ENCODE measurements at regions of chr12 and their contacts with region 1.

Region 1: DNA sequence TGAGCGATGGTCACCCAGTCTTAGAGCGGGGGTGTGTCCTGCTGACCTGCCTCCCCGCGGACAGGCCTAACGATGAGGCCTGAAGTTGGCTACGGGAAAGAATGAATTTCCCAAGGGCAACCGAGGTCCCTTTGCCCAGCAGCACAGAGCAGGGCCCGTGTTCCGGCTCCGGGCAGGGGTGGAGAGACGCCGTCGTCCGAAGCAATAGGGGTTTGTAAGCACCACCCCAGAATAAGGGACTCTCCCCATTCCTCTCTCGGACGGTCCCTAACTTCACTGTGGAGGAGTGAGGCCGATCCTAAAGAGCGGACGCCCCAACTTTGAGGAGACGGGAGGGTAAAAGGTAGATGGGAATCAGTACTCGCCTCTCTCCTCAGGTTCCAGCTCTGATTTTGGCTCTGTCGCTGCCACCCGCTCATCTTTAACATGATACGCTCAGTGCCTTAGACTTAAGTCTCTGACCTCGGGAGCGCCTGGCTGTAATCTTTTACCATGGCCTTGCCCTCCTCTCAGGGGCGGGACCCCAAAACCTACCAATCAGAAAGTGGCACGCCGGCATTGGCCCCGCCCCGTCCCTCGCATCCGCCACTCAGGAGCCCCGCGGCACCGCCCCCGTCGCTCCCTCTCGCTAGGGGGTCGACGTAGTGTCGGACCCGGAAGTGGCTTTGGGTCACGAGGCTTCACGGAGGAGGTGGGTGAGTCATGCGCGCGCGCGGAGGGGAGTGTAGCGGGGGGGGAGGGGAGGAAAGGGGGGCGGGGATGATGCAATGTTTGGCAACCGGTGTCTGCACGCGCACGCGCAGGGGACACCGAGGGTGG is at the start of gene DDIT3:
- DNase-seq: peak; percentile 99
- ATAC-seq: peak; percentile 73
- H3K4me3 Mint-ChIP-seq: peak within 1 kb of the TSS; percentile 98
- H3K27ac Mint-ChIP-seq: peak within 1 kb of the TSS; percentile 99
- H3K4me1 Mint-ChIP-seq: peaks cover 59% of the 10 kb centered on the region
- H3K27me3 Mint-ChIP-seq: no peaks in the 10 kb centered on the region
- CTCF ChIP-seq: no peak
- total RNA-seq, gene DDIT3: 30.5 and 34.3 TPM in 2 replicates

Region 2: DNA sequence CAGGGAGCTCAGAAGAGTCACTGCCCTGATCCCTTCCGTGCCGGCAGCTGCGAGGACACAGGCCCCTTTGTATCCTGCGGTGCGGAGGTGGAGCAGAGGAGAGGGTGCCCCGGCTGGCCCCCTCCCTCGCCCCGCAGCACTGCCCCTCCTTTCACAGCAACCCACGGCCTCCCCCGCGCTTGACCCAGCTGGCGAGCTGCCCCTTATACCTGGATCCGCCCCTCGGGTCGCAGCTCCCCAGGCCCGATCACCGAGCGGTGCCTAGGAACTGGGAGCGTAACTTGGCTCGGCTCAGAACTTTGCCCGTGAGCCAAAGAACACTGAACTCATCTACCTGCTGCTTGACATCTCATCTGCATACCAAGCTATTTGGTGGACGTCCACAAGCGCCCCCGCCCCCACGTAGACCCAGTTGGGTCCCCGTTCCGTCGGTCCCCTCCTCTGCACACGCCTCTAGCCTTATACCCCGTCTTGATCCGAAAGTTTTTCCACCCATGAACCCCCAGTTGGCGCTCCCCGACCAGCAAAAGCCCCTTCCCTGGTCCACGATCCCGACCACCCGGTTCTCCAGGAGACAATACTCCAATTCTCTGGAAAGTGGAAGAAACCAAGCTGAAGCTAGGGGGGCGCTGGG is 1690.2 kb before region 1 on chr12:
- CTCF ChIA-PET with region 1: no interaction called
- POLR2A ChIA-PET with region 1: no interaction called
- intact Hi-C with region 1: loop called (anchors 5 kb)
- DNase-seq: peak; percentile 32
- ATAC-seq: peak; percentile 13
- H3K4me3 Mint-ChIP-seq: peak overlapping the region; percentile 97
- H3K27ac Mint-ChIP-seq: peak overlapping the region; percentile 91
- H3K4me1 Mint-ChIP-seq: peaks cover 51% of the 10 kb centered on the region
- H3K27me3 Mint-ChIP-seq: no peaks in the 10 kb centered on the region
- CTCF ChIP-seq: no peak

Region 3: DNA sequence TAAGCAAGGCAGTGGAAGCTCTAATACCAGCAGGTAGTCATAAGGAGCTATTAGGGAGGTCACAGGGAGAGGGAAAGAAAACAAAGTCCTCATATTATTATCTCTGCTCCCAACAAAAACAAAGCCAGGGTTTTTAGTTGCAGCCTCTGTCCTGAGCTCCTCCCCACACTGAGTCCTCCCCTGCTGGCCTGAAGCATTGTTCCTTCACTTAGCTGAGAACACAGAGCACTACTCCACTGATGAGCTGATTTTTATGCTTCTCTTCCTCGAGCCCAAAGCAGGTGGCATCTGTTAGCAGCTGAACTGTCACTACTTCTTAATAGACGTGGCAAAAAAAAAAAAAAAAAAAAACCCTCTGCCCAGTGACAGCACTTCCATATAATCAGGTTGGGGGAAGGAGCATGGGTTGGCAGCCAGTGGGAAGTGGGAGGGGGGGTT is 258.8 kb before region 1 on chr12:
- CTCF ChIA-PET with region 1: no interaction called
- POLR2A ChIA-PET with region 1: no interaction called
- intact Hi-C with region 1: no loop called
- DNase-seq: no peak
- ATAC-seq: no peak
- H3K4me3 Mint-ChIP-seq: no peak overlapping the region
- H3K27ac Mint-ChIP-seq: no peak overlapping the region
- H3K4me1 Mint-ChIP-seq: peaks cover 5% of the 10 kb centered on the region
- H3K27me3 Mint-ChIP-seq: no peaks in the 10 kb centered on the region
- CTCF ChIP-seq: no peak

Region 4: DNA sequence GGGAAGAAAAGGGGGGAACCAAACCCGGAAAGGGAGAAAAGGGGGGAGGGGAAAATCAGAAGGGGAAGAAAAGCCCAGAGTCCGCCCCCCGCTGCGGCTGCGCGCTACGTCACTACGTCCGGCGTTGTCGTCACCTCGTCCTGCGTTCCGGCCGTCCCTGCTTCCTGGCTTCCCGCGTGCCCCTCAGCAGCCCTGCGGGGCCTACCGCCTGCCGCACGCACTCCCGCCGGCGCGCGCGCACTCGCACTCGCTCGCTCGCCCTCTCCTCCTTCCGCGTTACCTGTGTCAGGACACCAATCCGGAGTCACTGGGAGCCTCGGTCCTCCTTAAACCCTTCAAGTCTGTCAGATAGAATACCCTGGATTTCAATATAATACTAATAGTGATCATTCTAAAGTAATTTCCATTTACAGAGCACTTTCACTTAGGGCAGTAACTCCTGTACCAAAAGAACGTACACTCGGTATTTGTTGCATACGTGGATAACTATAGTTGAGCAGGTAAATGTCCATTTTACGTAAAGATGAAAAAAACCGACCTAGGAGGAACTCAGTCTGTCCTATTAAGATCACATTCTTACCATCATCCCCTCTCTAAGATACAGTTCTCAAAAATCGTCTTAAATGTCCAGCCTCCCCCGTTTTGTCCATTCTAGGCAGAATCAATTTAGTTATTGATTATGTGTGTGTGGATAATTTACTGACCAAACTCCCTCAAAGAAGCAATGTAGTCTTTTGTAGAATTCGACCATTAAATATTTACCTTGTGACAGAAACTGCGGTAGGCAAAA is 89.1 kb before region 1 on chr12 and contains the start of gene R3HDM2:
- CTCF ChIA-PET with region 1: no interaction called
- POLR2A ChIA-PET with region 1: interaction called, 9 read pairs
- intact Hi-C with region 1: loop called (anchors 1 kb)
- DNase-seq: peak; percentile 94
- ATAC-seq: peak; percentile 91
- H3K4me3 Mint-ChIP-seq: peak within 1 kb of the TSS; percentile 97
- H3K27ac Mint-ChIP-seq: peak within 1 kb of the TSS; percentile 99
- H3K4me1 Mint-ChIP-seq: peaks cover 39% of the 10 kb centered on the region
- H3K27me3 Mint-ChIP-seq: no peaks in the 10 kb centered on the region
- CTCF ChIP-seq: no peak
- total RNA-seq, gene R3HDM2: 74.2 and 75.6 TPM in 2 replicates

Region 5: GRCh38 chr12:57487597-57488401 is 32.5 kb before region 1 on chr12 and contains the start of gene MARS1:
- CTCF ChIA-PET with region 1: no interaction called
- POLR2A ChIA-PET with region 1: interaction called, 19 read pairs
- intact Hi-C with region 1: loop called (anchors 1 kb)
- DNase-seq: peak; percentile 83
- ATAC-seq: peak; percentile 97
- H3K4me3 Mint-ChIP-seq: peak within 1 kb of the TSS; percentile 97
- H3K27ac Mint-ChIP-seq: peak within 1 kb of the TSS; percentile 97
- H3K4me1 Mint-ChIP-seq: peaks cover 41% of the 10 kb centered on the region
- H3K27me3 Mint-ChIP-seq: no peaks in the 10 kb centered on the region
- CTCF ChIP-seq: no peak
- total RNA-seq, gene MARS1: 368 and 425 TPM in 2 replicates

Region 6: DNA sequence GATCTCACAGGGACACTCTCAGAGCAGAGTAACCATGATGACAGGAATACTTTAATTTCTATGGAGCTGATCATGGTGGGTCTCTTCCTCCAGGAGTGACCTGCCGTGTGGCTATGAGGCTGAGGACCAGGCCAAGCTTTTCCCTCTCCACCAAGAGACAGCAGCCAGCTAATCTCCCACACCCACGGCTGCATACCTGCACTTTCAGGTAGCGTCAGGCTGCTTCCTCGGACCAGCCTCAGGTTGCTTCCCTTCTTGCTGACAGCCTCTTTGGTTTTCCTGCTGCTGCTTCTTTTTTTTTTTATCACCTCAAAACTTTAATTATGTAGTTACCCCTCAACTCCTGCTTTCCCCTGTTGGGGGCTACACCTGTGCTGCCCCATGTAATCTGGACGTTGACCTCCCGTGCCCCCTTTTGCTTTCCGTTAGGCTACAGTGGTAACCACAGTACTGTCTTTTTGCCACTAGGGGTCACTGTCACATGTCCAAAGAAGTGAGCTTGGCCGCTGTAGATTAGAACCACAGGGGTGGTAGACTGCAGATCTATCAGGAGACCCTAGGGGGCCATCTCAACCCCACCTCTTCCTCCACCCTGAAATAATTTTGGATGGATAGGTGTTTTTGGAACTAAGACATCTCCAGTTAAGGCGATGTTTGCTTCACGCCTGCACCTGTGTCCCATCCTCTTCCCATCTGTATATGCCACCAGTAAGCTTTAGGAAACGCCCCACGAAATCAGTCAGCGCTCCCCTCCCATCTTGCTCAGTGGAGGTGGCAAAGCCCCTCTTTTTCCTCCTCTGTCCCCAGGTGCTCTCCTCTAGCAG is 63.0 kb after region 1 on chr12:
- CTCF ChIA-PET with region 1: no interaction called
- POLR2A ChIA-PET with region 1: no interaction called
- intact Hi-C with region 1: loop called (anchors 2 kb)
- DNase-seq: peak; percentile 24
- ATAC-seq: peak; percentile 100
- H3K4me3 Mint-ChIP-seq: no peak overlapping the region
- H3K27ac Mint-ChIP-seq: no peak overlapping the region
- H3K4me1 Mint-ChIP-seq: peaks cover 4% of the 10 kb centered on the region
- H3K27me3 Mint-ChIP-seq: peaks cover 12% of the 10 kb centered on the region
- CTCF ChIP-seq: peak; percentile 85

Region 7: GRCh38 chr12:57693659-57694458 is 173.6 kb after region 1 on chr12 and contains the start of gene OS9:
- CTCF ChIA-PET with region 1: no interaction called
- POLR2A ChIA-PET with region 1: interaction called, 5 read pairs
- intact Hi-C with region 1: loop called (anchors 1 kb)
- DNase-seq: peak; percentile 73
- ATAC-seq: peak; percentile 91
- H3K4me3 Mint-ChIP-seq: no peak within 1 kb of the TSS
- H3K27ac Mint-ChIP-seq: no peak within 1 kb of the TSS
- H3K4me1 Mint-ChIP-seq: peaks cover 2% of the 10 kb centered on the region
- H3K27me3 Mint-ChIP-seq: peaks cover 8% of the 10 kb centered on the region
- CTCF ChIP-seq: no peak
- total RNA-seq, gene OS9: 166 TPM in 2 replicates

Measured in activated B cell treated with CpG ODN at 0.5 μM for 24 hours (primary cell).